PC-9 (cell line): ENCODE measurements at regions of chr17 and their contacts with region 1.

Region 1: GRCh38 chr17:66963987-66964804 is at the start of gene CACNG4:
- DNase-seq: peak in 1 of 2 experiments; percentile 62
- H3K4me3 ChIP-seq: peak within 1 kb of the TSS; percentile 77
- H3K27ac ChIP-seq: no peak within 1 kb of the TSS
- H3K4me1 ChIP-seq: peaks cover 25% of the 10 kb centered on the region; the same call in 1 of the 2 replicates
- H3K27me3 ChIP-seq: no peaks in the 10 kb centered on the region
- CTCF ChIP-seq: no peak
- total RNA-seq, gene CACNG4: 45.1 and 46.3 TPM in 2 replicates

Region 2: GRCh38 chr17:66727639-66728570 is 236.3 kb before region 1 on chr17:
- CTCF ChIA-PET with region 1: interaction called, 14 read pairs
- POLR2A ChIA-PET with region 1: no interaction called
- intact Hi-C with region 1: no loop called
- DNase-seq: peak in 1 of 2 experiments; percentile 40
- H3K4me3 ChIP-seq: no peak overlapping the region
- H3K27ac ChIP-seq: no peak overlapping the region
- H3K4me1 ChIP-seq: 0 out of 2 replicates have a peak, but pooled peaks cover 5% of the 10 kb centered on the region
- H3K27me3 ChIP-seq: no peaks in the 10 kb centered on the region
- CTCF ChIP-seq: peak; percentile 68

Region 3: GRCh38 chr17:66915204-66916096 is 48.7 kb before region 1 on chr17:
- CTCF ChIA-PET with region 1: interaction called, 8 read pairs
- POLR2A ChIA-PET with region 1: no interaction called
- intact Hi-C with region 1: loop called (anchors 1 kb)
- DNase-seq: peak; percentile 58 to 70
- H3K4me3 ChIP-seq: no peak overlapping the region
- H3K27ac ChIP-seq: no peak overlapping the region
- H3K4me1 ChIP-seq: 0 out of 2 replicates have a peak, but pooled peaks cover 5% of the 10 kb centered on the region
- H3K27me3 ChIP-seq: no peaks in the 10 kb centered on the region
- CTCF ChIP-seq: peak; percentile 69

Region 4: GRCh38 chr17:66951935-66952662 is 12.1 kb before region 1 on chr17:
- CTCF ChIA-PET with region 1: no interaction called
- POLR2A ChIA-PET with region 1: interaction called, 3 read pairs
- intact Hi-C with region 1: loop called (anchors 1 kb)
- DNase-seq: peak; percentile 96 to 100
- H3K4me3 ChIP-seq: peak overlapping the region; percentile 40; the same call in 1 of the 2 replicates
- H3K27ac ChIP-seq: peak overlapping the region; percentile 99
- H3K4me1 ChIP-seq: peaks cover 71% of the 10 kb centered on the region
- H3K27me3 ChIP-seq: no peaks in the 10 kb centered on the region
- CTCF ChIP-seq: no peak

Region 5: GRCh38 chr17:67042104-67042899 is 78.1 kb after region 1 on chr17:
- CTCF ChIA-PET with region 1: no interaction called
- POLR2A ChIA-PET with region 1: no interaction called
- intact Hi-C with region 1: no loop called
- DNase-seq: no peak
- H3K4me3 ChIP-seq: no peak overlapping the region
- H3K27ac ChIP-seq: no peak overlapping the region
- H3K4me1 ChIP-seq: no peaks in the 10 kb centered on the region
- H3K27me3 ChIP-seq: no peaks in the 10 kb centered on the region
- CTCF ChIP-seq: no peak

Region 6: DNA sequence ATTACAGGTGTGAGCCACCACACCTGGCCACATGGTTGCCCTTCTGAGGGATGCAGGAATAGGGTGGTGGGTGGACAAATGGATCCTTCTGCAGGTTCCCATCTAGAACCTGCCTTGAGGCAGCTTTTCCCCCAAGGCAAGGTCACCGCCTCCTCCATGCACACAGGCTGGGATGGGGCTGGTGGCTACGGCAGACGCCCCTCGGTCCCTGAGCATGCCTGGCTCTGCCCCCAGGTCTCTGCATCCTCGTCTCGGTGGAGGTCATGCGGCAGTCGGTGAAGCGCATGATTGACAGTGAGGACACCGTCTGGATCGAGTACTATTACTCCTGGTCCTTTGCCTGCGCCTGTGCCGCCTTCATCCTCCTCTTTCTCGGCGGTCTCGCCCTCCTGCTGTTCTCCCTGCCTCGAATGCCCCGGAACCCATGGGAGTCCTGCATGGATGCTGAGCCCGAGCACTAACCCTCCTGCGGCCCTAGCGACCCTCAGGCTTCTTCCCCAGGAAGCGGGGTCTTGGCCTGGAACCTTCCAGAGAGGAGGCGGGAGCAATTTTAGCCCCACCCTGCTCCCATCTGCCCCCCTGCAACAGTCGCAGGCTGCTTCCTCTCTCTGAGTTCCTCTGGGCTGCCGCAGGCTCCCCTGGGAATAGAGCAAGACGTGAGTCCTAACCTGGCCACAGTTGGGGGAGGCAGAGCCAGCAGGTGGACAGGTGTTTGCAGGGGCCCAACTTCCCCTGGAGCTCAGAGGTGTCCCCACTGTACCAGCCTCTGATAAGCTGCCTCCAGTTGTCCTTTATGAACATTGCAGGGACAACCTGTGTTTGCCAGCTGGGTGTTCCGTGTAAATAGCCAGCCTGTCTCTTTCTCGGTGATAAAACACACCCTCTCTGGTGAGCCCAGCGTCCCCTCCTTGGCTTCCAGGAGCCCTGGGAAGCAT is 91.9 kb after region 1 on chr17:
- CTCF ChIA-PET with region 1: no interaction called
- POLR2A ChIA-PET with region 1: no interaction called
- intact Hi-C with region 1: no loop called
- DNase-seq: no peak
- H3K4me3 ChIP-seq: no peak overlapping the region
- H3K27ac ChIP-seq: no peak overlapping the region
- H3K4me1 ChIP-seq: no peaks in the 10 kb centered on the region
- H3K27me3 ChIP-seq: no peaks in the 10 kb centered on the region
- CTCF ChIP-seq: no peak

Region 7: GRCh38 chr17:67491009-67491680 is 526.9 kb after region 1 on chr17:
- CTCF ChIA-PET with region 1: no interaction called
- POLR2A ChIA-PET with region 1: interaction called, 12 read pairs
- intact Hi-C with region 1: no loop called
- DNase-seq: peak; percentile 77 to 83
- H3K4me3 ChIP-seq: peak overlapping the region; percentile 50; the same call in 1 of the 2 replicates
- H3K27ac ChIP-seq: no peak overlapping the region
- H3K4me1 ChIP-seq: peaks cover 8% of the 10 kb centered on the region
- H3K27me3 ChIP-seq: no peaks in the 10 kb centered on the region
- CTCF ChIP-seq: no peak

Region 8: GRCh38 chr17:67503184-67503583 is 539.0 kb after region 1 on chr17:
- CTCF ChIA-PET with region 1: no interaction called
- POLR2A ChIA-PET with region 1: no interaction called
- intact Hi-C with region 1: no loop called
- DNase-seq: peak; percentile 48 to 81
- H3K4me3 ChIP-seq: no peak overlapping the region
- H3K27ac ChIP-seq: peak overlapping the region; percentile 24; the same call in 1 of the 2 replicates
- H3K4me1 ChIP-seq: peaks cover 28% of the 10 kb centered on the region
- H3K27me3 ChIP-seq: no peaks in the 10 kb centered on the region
- CTCF ChIP-seq: no peak

Region 9: DNA sequence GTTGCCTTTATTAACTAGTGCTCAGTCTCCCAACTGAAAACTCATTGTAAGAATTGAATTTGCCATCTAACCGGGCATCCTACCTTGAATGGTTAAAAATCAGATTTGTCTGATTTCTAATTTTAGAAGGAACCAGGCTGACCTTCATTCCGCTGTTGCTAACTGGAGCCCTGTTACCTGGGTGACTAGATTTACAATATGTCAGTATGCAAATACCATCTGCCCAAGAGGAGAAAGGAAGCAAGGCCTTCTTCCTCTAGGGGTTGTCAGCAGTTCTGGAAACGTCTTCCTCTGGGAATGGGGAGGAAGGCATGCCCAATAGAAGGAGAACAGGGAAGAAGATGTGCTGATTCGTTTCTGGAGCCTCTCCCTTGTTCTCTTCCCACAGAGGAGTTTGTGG is 550.8 kb after region 1 on chr17:
- CTCF ChIA-PET with region 1: no interaction called
- POLR2A ChIA-PET with region 1: no interaction called
- intact Hi-C with region 1: no loop called
- DNase-seq: no peak
- H3K4me3 ChIP-seq: no peak overlapping the region
- H3K27ac ChIP-seq: no peak overlapping the region
- H3K4me1 ChIP-seq: no peaks in the 10 kb centered on the region
- H3K27me3 ChIP-seq: no peaks in the 10 kb centered on the region
- CTCF ChIP-seq: no peak